CD14-positive monocyte (primary cell): ENCODE measurements at regions of chr11 and their contacts with region 1.

Region 1: GRCh38 chr11:17504330-17505107 is 27.9 kb upstream of the ABCC8 start:
- DNase-seq: peak; percentile 33 to 53 (median 46)
- H3K4me3 ChIP-seq: no peak overlapping the region
- H3K4me3 Mint-ChIP-seq: no peak overlapping the region
- H3K27ac ChIP-seq: no peak overlapping the region
- H3K27ac Mint-ChIP-seq: peak overlapping the region in 1 of 7 donors; percentile 50
- H3K4me1 ChIP-seq: no peaks in the 10 kb centered on the region
- H3K4me1 Mint-ChIP-seq: no peaks in the 10 kb centered on the region
- H3K27me3 ChIP-seq: no peaks in the 10 kb centered on the region
- H3K27me3 Mint-ChIP-seq: peaks cover 4 to 7% (median 5%) of the 10 kb centered on the region in 3 donors
- CTCF ChIP-seq: peak; percentile 77

Region 2: DNA sequence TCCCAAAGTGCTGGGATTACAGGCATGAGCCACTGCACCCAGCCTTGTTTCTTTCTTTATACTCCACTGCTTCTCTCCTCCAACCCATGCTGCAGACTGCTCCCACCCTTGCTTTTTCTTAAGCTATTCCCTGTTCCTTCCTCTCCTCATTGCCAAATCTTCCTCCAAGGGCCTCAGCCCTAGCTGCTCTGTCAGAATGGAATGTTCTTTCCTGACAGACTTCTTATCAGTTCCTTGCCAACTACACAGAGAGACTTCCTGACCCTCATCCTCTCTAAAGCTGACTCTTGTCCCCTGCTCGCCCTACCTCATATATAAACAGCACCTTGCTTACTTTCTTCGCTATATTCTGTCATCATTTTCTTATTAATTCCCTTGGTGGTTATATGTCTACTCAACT is 279.8 kb before region 1 on chr11:
- intact Hi-C with region 1: loop called in 1 of 2 experiments (anchors 5 kb)
- DNase-seq: no peak
- H3K4me3 ChIP-seq: no peak overlapping the region
- H3K4me3 Mint-ChIP-seq: no peak overlapping the region
- H3K27ac ChIP-seq: no peak overlapping the region
- H3K27ac Mint-ChIP-seq: no peak overlapping the region
- H3K4me1 ChIP-seq: peaks cover 4 to 6% of the 10 kb centered on the region in 2 donors
- H3K4me1 Mint-ChIP-seq: peaks cover 5% of the 10 kb centered on the region
- H3K27me3 ChIP-seq: no peaks in the 10 kb centered on the region
- H3K27me3 Mint-ChIP-seq: peaks cover 0 to 4% (median 0%) of the 10 kb centered on the region in 3 donors
- CTCF ChIP-seq: no peak

Region 3: DNA sequence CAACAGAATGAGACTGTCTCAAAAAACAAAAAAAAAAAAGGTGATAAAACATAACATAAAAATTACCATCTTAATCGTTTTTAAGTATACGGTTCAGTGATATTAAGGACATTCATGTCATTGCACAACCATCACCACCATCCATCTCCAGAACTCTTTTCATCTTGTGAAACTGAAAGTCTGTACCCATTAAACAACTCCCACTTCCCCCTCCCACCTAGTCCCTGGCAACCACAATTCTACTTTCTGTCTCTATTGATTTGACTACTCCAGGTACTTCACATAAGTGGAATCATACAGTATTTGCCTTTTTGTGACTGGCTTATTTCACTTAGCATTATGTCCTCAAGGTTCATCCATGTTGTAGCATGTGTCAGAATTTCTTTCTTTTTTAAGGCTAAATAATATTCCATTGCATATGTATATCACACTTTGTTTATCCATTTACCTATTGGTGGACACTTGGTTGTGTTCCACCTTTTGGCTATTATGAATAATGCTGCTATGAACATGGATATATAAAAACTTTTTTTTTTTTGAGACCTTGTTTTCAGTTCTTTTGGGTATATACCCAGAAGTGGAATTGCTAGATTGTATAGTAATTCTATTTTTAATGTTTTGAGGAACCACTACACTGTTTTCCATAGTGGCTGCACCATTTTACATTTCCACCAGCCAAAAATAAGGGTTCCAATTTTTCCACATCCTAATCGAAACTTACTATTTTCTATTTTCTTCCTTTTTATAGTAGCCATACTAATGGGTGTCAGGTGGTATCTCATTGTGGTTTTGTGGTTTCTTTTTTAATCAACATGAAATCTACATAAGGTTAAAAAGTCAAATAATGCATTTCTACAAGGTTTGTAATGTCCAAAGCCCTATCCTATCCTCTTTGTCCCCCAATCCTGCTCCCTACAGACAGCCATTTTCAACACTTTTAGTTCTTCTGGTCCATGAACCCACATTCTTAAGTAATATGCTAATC is 273.4 kb before region 1 on chr11:
- intact Hi-C with region 1: loop called (anchors 5 to 10 kb)
- DNase-seq: peak; percentile 35 to 52 (median 48)
- H3K4me3 ChIP-seq: peak overlapping the region in 1 of 3 experiments; percentile 43
- H3K4me3 Mint-ChIP-seq: no peak overlapping the region
- H3K27ac ChIP-seq: no peak overlapping the region
- H3K27ac Mint-ChIP-seq: peak overlapping the region in 1 of 7 donors; percentile 15
- H3K4me1 ChIP-seq: peaks cover 7 to 15% of the 10 kb centered on the region in 2 donors
- H3K4me1 Mint-ChIP-seq: peaks cover 12% of the 10 kb centered on the region
- H3K27me3 ChIP-seq: peaks cover 0 to 2% of the 10 kb centered on the region in 2 donors
- H3K27me3 Mint-ChIP-seq: peaks cover 2 to 8% (median 3%) of the 10 kb centered on the region in 3 donors
- CTCF ChIP-seq: no peak

Region 4: GRCh38 chr11:17384002-17384511 is 120.5 kb before region 1 on chr11:
- intact Hi-C with region 1: loop called (anchors 5 kb)
- DNase-seq: peak; percentile 69 to 75 (median 69)
- H3K4me3 ChIP-seq: no peak overlapping the region
- H3K4me3 Mint-ChIP-seq: no peak overlapping the region
- H3K27ac ChIP-seq: peak overlapping the region in 1 of 2 donors; percentile 63
- H3K27ac Mint-ChIP-seq: peak overlapping the region in 3 of 7 donors; percentile 11 to 53 (median 28)
- H3K4me1 ChIP-seq: peaks cover 6 to 15% of the 10 kb centered on the region in 2 donors
- H3K4me1 Mint-ChIP-seq: peaks cover 14% of the 10 kb centered on the region
- H3K27me3 ChIP-seq: peaks cover 0 to 13% of the 10 kb centered on the region in 2 donors
- H3K27me3 Mint-ChIP-seq: peaks cover 9 to 16% (median 13%) of the 10 kb centered on the region in 3 donors
- CTCF ChIP-seq: peak; percentile 95

Region 5: GRCh38 chr11:17389211-17389956 is 115.1 kb before region 1 on chr11:
- intact Hi-C with region 1: loop called (anchors 5 kb)
- DNase-seq: peak; percentile 39 to 68 (median 41)
- H3K4me3 ChIP-seq: peak overlapping the region; percentile 39 to 71 (median 40)
- H3K4me3 Mint-ChIP-seq: peak overlapping the region; percentile 73 to 86
- H3K27ac ChIP-seq: no peak overlapping the region
- H3K27ac Mint-ChIP-seq: no peak overlapping the region
- H3K4me1 ChIP-seq: peaks cover 10 to 13% of the 10 kb centered on the region in 2 donors
- H3K4me1 Mint-ChIP-seq: peaks cover 10% of the 10 kb centered on the region
- H3K27me3 ChIP-seq: peaks cover 3 to 28% of the 10 kb centered on the region in 2 donors
- H3K27me3 Mint-ChIP-seq: peaks cover 16 to 30% (median 25%) of the 10 kb centered on the region in 3 donors
- CTCF ChIP-seq: peak; percentile 70

Region 6: GRCh38 chr11:17412488-17413180 is 91.9 kb before region 1 on chr11:
- intact Hi-C with region 1: no loop called
- DNase-seq: no peak
- H3K4me3 ChIP-seq: no peak overlapping the region
- H3K4me3 Mint-ChIP-seq: no peak overlapping the region
- H3K27ac ChIP-seq: no peak overlapping the region
- H3K27ac Mint-ChIP-seq: no peak overlapping the region
- H3K4me1 ChIP-seq: no peaks in the 10 kb centered on the region
- H3K4me1 Mint-ChIP-seq: no peaks in the 10 kb centered on the region
- H3K27me3 ChIP-seq: no peaks in the 10 kb centered on the region
- H3K27me3 Mint-ChIP-seq: peaks cover 0 to 4% (median 1%) of the 10 kb centered on the region in 3 donors
- CTCF ChIP-seq: no peak